Activated B cell treated with CpG ODN at 0.5 μM for 24 hours (primary cell): ENCODE measurements at regions of chr16 and their contacts with region 1.

Region 1: GRCh38 chr16:14249291-14250032 is 178.3 kb downstream of the MRTFB start:
- DNase-seq: no peak
- ATAC-seq: no peak
- H3K4me3 Mint-ChIP-seq: no peak overlapping the region
- H3K27ac Mint-ChIP-seq: no peak overlapping the region
- H3K4me1 Mint-ChIP-seq: no peaks in the 10 kb centered on the region
- H3K27me3 Mint-ChIP-seq: no peaks in the 10 kb centered on the region
- CTCF ChIP-seq: peak; percentile 76

Region 2: GRCh38 chr16:14172200-14172782 is 77.2 kb before region 1 on chr16:
- CTCF ChIA-PET with region 1: no interaction called
- POLR2A ChIA-PET with region 1: no interaction called
- intact Hi-C with region 1: no loop called
- DNase-seq: no peak
- ATAC-seq: no peak
- H3K4me3 Mint-ChIP-seq: no peak overlapping the region
- H3K27ac Mint-ChIP-seq: no peak overlapping the region
- H3K4me1 Mint-ChIP-seq: peaks cover 2% of the 10 kb centered on the region
- H3K27me3 Mint-ChIP-seq: no peaks in the 10 kb centered on the region
- CTCF ChIP-seq: no peak

Region 3: GRCh38 chr16:14263011-14263410 is 13.5 kb after region 1 on chr16:
- CTCF ChIA-PET with region 1: interaction called, 10 read pairs
- POLR2A ChIA-PET with region 1: no interaction called
- intact Hi-C with region 1: no loop called
- DNase-seq: no peak
- ATAC-seq: no peak
- H3K4me3 Mint-ChIP-seq: no peak overlapping the region
- H3K27ac Mint-ChIP-seq: no peak overlapping the region
- H3K4me1 Mint-ChIP-seq: no peaks in the 10 kb centered on the region
- H3K27me3 Mint-ChIP-seq: no peaks in the 10 kb centered on the region
- CTCF ChIP-seq: no peak

Region 4: GRCh38 chr16:14529010-14529669 is 279.7 kb after region 1 on chr16:
- CTCF ChIA-PET with region 1: interaction called, 56 read pairs
- POLR2A ChIA-PET with region 1: no interaction called
- intact Hi-C with region 1: loop called (anchors 1 kb)
- DNase-seq: peak; percentile 24
- ATAC-seq: peak; percentile 65
- H3K4me3 Mint-ChIP-seq: no peak overlapping the region
- H3K27ac Mint-ChIP-seq: no peak overlapping the region
- H3K4me1 Mint-ChIP-seq: peaks cover 5% of the 10 kb centered on the region
- H3K27me3 Mint-ChIP-seq: no peaks in the 10 kb centered on the region
- CTCF ChIP-seq: no peak

Region 5: DNA sequence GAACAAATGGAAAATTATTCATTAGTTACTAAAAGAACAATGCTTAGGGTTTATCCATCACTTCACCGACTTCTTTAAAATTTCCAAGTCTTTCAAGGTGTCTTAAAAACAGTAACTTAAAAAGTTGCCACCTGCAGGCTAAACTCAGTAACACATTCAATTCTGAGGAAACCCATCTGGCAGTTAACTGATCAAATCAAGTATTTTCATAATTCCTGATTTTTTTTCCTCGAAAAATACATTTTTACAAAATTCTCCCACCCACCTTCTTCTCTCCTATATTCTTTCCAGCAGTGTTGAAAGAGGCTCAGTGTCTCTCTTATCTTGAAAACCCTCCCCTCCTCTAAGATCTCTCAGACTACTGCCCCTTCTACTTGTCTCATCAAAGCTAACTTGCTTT is 350.7 kb after region 1 on chr16:
- CTCF ChIA-PET with region 1: interaction called, 13 read pairs
- POLR2A ChIA-PET with region 1: no interaction called
- intact Hi-C with region 1: loop called (anchors 1 kb)
- DNase-seq: no peak
- ATAC-seq: no peak
- H3K4me3 Mint-ChIP-seq: no peak overlapping the region
- H3K27ac Mint-ChIP-seq: no peak overlapping the region
- H3K4me1 Mint-ChIP-seq: no peaks in the 10 kb centered on the region
- H3K27me3 Mint-ChIP-seq: no peaks in the 10 kb centered on the region
- CTCF ChIP-seq: peak; percentile 49